Thyroid gland (tissue), 4 donors: ENCODE measurements at regions of chrX and their contacts with region 1.

Region 1: DNA sequence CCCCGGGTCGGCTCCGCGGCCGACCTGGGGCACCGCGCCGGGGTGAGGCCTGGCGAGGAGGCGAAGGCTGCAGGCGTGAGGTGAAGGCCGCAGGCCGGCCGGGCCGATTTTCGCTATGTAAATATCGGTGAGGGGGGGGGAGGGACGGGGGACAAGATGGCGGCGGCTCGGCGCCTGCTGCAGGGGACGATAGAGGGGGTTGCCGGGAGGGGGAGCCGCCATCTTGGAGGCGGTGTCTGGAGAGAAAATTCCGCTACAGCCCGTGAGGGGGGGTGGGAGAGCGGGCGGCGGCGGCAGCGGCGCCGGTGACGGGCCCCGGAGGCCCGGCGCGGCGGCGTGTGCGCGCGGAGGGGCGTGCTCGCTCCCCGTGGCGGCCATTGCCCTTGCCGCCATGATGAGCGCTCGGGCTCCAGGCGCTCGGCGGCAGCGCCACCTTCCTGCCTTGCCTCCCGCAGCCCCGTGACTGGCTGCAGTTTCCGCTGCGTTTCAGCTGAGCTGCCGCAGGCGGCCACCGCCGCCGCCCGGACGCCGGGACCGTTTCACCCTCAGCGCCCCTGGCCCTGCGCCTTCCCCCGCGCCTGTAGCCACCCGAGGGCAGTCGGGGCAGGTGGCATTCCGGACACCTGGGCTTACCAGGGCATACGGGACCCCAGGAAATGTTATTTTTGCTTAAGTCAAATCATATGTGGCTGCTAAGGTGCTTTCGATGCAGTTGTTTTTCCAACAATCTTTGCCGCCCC is 692 bp downstream of the ZFX start:
- DNase-seq: peak; percentile 82 to 85
- H3K4me3 ChIP-seq: peak overlapping the region in 2 of 3 donors; percentile 47 to 70
- H3K27ac ChIP-seq: peak overlapping the region; percentile 95 to 98 (median 97)
- H3K4me1 ChIP-seq: peaks cover 55 to 60% of the 10 kb centered on the region in 2 donors
- H3K27me3 ChIP-seq: no peaks in the 10 kb centered on the region
- CTCF ChIP-seq: peak in 4 of 6 experiments; percentile 16 to 53 (median 42)
- POLR2A ChIP-seq: peak in 1 of 2 donors; percentile 60

Region 2: DNA sequence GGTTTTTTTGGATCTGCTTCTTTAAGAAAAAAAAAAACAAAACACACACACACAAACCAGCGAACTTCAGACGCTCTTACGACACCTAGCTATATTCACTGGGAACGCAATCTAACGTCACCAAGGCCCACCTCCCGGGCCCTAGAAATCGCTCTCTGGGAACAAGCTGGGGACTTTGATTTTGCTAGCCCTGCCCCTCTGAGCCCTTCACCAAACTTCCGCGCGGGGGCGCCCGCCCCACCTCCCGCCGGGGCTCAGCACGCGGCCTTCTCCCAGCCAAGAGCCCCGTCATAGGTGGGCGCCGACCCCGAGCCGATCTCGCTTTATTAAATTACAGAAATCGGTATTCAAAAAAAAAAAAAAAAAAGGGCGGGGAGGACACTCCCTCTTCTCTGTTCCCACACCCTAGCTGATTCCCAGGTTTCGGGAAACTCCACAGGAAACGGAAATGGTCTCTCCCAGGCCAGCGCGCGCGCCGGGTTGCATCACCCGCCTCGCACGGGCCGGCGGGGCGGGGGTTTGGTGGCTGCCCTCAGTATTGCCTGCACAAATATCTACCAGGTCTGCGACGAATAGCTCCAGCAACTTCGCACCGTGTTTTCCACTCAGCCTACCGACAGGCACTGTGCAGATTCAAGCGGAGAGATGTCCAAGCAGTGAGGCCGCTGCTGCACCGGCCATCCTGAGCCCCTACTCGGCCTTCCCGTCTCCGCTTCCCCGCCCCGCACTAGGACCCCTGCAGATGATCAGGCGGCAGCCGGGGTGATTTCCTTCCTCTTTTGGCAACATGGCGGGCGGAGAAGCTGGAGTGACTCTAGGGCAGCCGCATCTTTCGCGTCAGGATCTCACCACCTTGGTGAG is 95.8 kb before region 1 on chrX and contains the start of gene EIF2S3:
- intact Hi-C with region 1: loop called (anchors 10 kb)
- DNase-seq: peak; percentile 83 to 85
- H3K4me3 ChIP-seq: peak within 1 kb of the TSS in 2 of 3 donors; percentile 65 to 70
- H3K27ac ChIP-seq: peak within 1 kb of the TSS; percentile 76 to 92 (median 78)
- H3K4me1 ChIP-seq: no peaks in the 10 kb centered on the region
- H3K27me3 ChIP-seq: no peaks in the 10 kb centered on the region
- CTCF ChIP-seq: peak; percentile 21 to 50 (median 42)
- POLR2A ChIP-seq: peak in 1 of 2 donors; percentile 36
- total RNA-seq, gene EIF2S3: 115 to 176 (median 138) TPM

Region 3: GRCh38 chrX:24204331-24204730 is 54.1 kb after region 1 on chrX:
- intact Hi-C with region 1: loop called (anchors 10 kb)
- DNase-seq: no peak
- H3K4me3 ChIP-seq: no peak overlapping the region
- H3K27ac ChIP-seq: no peak overlapping the region
- H3K4me1 ChIP-seq: peaks cover 25 to 30% of the 10 kb centered on the region in 2 donors
- H3K27me3 ChIP-seq: no peaks in the 10 kb centered on the region
- CTCF ChIP-seq: no peak
- POLR2A ChIP-seq: no peak